Heart right ventricle (tissue), 16 donors: ENCODE measurements at regions of chr19 and their contacts with region 1.

Region 1: GRCh38 chr19:383922-384798 is 24.8 kb downstream of the C2CD4C start:
- DNase-seq: peak in 1 of 2 donors; percentile 45
- ATAC-seq: peak; percentile 49 to 86 (median 77)
- H3K4me3 ChIP-seq: no peak overlapping the region
- H3K27ac ChIP-seq: no peak overlapping the region
- H3K4me1 ChIP-seq: peaks cover 0 to 5% (median 0%) of the 10 kb centered on the region in 9 donors
- H3K27me3 ChIP-seq: peaks cover 0 to 49% (median 34%) of the 10 kb centered on the region in 7 donors
- CTCF ChIP-seq: peak; percentile 42 to 72 (median 65)

Region 2: GRCh38 chr19:474126-475078 is 90.2 kb after region 1 on chr19:
- intact Hi-C with region 1: loop called in 3 of 10 experiments (anchors 5 to 10 kb)
- DNase-seq: peak; percentile 32 to 61
- ATAC-seq: peak; percentile 53 to 90 (median 76)
- H3K4me3 ChIP-seq: peak overlapping the region in 8 of 10 donors; percentile 0 to 34 (median 20)
- H3K27ac ChIP-seq: peak overlapping the region in 9 of 10 donors; percentile 42 to 85 (median 67)
- H3K4me1 ChIP-seq: peaks cover 0 to 14% (median 8%) of the 10 kb centered on the region in 9 donors
- H3K27me3 ChIP-seq: peaks cover 0 to 3% (median 0%) of the 10 kb centered on the region in 7 donors
- CTCF ChIP-seq: peak in 2 of 9 donors; percentile 13 to 26

Region 3: GRCh38 chr19:480016-480855 is 96.1 kb after region 1 on chr19:
- intact Hi-C with region 1: loop called in 9 of 10 experiments (anchors 1 to 10 kb)
- DNase-seq: peak; percentile 84 to 89
- ATAC-seq: peak; percentile 86 to 98 (median 94)
- H3K4me3 ChIP-seq: peak overlapping the region in 7 of 10 donors; percentile 4 to 49 (median 40)
- H3K27ac ChIP-seq: peak overlapping the region in 6 of 10 donors; percentile 27 to 73 (median 68)
- H3K4me1 ChIP-seq: peaks cover 0 to 9% (median 4%) of the 10 kb centered on the region in 9 donors
- H3K27me3 ChIP-seq: peaks cover 0 to 21% (median 11%) of the 10 kb centered on the region in 7 donors
- CTCF ChIP-seq: peak; percentile 51 to 84 (median 77)

Region 4: GRCh38 chr19:488505-489417 is 104.6 kb after region 1 on chr19:
- intact Hi-C with region 1: loop called in 3 of 10 experiments (anchors 5 to 10 kb)
- DNase-seq: peak; percentile 96 to 98
- ATAC-seq: peak; percentile 96 to 98 (median 98)
- H3K4me3 ChIP-seq: peak overlapping the region; percentile 76 to 100 (median 96)
- H3K27ac ChIP-seq: peak overlapping the region; percentile 90 to 98 (median 96)
- H3K4me1 ChIP-seq: peaks cover 0 to 24% (median 11%) of the 10 kb centered on the region in 9 donors
- H3K27me3 ChIP-seq: peaks cover 0 to 30% (median 23%) of the 10 kb centered on the region in 7 donors
- CTCF ChIP-seq: peak in 1 of 9 donors; percentile 12